ENCODE measurements at regions of chr15 and their contacts with region 1.

Region 1: DNA sequence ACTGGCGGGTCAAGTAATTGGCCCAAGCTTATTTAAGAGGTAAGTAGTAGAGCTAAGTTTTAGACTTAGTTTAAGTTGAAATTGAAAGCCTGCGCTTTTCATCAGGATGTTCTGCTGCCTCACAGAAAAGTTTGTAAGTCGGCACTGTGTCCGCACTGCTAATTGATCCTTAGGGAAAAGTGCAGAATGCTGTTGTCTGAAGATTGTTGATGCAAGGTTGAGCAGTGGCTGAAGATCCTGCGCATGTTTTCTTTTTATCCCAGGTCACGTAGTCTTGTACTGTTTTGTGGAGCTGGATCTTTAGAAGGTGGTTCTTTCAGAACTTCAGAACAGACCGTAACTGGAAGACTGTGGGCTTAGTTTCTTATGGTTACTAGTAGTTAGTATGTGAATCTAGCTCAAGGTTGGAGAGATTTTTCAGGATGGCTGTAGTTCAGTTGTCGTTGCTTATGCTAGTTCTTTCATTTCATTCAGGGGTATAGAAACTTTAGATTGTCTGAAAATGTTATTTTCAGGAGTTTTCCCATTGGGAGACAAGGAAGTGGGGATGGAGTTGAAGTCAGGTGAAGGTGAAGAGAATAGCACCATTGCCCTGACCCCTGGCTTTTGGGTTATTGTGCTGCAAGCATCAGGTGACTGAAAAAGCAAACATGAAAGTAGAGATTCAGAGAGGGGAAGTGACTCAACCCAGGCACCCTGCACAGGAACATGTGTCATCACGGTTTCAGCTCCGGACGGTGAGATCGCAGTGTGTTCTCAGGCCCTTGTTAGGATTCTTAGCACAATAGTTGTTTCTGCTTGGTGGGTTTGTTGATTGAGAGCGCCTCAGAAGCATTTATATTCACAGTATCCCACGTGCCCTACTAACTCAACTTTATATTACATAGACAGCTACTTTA is 32.8 kb downstream of the AKAP13 start:
- DNase-seq: peak; percentile 66
- H3K4me3 Mint-ChIP-seq: peak overlapping the region; percentile 64
- H3K27ac Mint-ChIP-seq: peak overlapping the region; percentile 85
- H3K4me1 Mint-ChIP-seq: peaks cover 64% of the 10 kb centered on the region
- H3K27me3 Mint-ChIP-seq: no peaks in the 10 kb centered on the region

Region 2: DNA sequence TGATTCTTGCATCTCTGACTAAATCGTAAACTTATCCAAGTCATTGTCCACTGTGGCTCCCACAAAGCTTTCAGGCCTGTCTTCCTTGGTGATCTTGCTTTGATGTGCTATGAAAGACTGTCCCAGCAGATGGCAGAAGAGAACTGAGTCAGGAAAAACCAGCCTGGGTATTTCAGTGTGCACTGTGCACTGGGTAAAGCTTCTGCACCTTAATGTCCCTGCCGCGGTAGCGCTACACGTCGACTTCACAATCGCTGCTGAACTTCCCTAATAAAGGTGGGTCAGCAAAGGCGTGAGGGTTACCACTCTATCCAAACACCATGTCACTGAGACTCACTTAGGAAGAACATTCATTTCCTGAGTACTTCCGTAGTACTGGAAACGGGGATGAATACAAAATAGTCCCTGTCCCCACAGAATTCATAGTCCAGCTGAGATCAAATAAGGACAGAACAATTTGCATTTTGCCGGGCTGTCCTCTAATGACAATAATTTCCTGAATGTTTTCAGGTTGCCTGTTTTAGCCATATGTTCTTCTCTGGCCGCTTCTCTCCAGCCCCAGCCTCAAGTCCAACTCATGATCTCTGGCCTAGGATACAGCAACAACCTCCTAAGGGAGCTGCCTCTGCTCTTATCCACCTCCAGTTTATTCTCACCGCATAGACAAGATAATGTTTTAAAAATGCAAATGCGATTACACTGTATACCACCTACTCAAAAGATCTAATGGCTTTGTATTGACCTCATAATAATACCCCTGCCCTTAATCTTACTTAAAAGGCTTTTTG is 116.4 kb before region 1 on chr15:
- intact Hi-C with region 1: loop called (anchors 1 kb)
- DNase-seq: peak; percentile 68
- H3K4me3 Mint-ChIP-seq: peak overlapping the region; percentile 34
- H3K27ac Mint-ChIP-seq: no peak overlapping the region
- H3K4me1 Mint-ChIP-seq: peaks cover 18% of the 10 kb centered on the region
- H3K27me3 Mint-ChIP-seq: peaks cover 5% of the 10 kb centered on the region

Region 3: DNA sequence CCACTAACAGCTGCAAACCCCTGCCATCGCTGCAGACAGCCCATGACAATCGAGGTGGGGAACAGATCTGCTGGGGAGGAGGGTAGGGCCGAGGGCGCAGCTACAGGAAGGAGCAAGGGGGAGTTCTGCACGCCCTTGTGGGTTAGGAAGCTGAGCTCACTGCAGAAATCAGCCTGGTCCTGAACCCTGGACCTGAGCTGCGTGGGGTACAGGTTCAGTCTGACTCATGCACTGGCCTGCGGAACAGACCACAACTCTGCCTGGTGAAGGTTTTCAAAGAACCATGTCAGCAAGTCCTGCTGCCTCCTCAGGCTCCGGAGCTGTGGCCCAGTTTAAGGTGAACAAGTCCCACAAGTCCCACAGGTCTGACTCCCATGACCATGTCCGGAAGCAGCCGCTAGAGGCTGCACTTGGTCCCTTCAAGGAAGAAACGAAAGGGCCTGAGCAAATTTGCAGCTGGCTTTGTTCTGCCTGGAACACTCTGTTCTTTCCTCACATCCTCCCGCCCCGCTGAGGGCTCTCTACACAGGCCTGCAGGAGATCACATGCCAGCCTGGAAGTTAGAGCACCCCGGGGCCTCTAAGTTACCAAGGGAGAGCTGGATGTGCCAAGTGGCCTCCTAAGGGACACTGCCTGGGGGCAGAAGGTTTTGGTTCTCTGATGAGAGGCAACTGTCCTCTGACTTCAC is 82.2 kb before region 1 on chr15:
- intact Hi-C with region 1: loop called (anchors 1 kb)
- DNase-seq: peak; percentile 72
- H3K4me3 Mint-ChIP-seq: peak overlapping the region; percentile 88
- H3K27ac Mint-ChIP-seq: peak overlapping the region; percentile 92
- H3K4me1 Mint-ChIP-seq: peaks cover 51% of the 10 kb centered on the region
- H3K27me3 Mint-ChIP-seq: no peaks in the 10 kb centered on the region

Region 4: GRCh38 chr15:85380217-85380811 is 32.9 kb before region 1 on chr15 and contains the start of gene AKAP13:
- intact Hi-C with region 1: loop called (anchors 1 kb)
- DNase-seq: peak; percentile 93
- H3K4me3 Mint-ChIP-seq: peak within 1 kb of the TSS; percentile 90
- H3K27ac Mint-ChIP-seq: peak within 1 kb of the TSS; percentile 94
- H3K4me1 Mint-ChIP-seq: peaks cover 68% of the 10 kb centered on the region
- H3K27me3 Mint-ChIP-seq: peaks cover 2% of the 10 kb centered on the region
- total RNA-seq, gene AKAP13: 78.9 and 81.9 TPM in 2 replicates

Region 5: DNA sequence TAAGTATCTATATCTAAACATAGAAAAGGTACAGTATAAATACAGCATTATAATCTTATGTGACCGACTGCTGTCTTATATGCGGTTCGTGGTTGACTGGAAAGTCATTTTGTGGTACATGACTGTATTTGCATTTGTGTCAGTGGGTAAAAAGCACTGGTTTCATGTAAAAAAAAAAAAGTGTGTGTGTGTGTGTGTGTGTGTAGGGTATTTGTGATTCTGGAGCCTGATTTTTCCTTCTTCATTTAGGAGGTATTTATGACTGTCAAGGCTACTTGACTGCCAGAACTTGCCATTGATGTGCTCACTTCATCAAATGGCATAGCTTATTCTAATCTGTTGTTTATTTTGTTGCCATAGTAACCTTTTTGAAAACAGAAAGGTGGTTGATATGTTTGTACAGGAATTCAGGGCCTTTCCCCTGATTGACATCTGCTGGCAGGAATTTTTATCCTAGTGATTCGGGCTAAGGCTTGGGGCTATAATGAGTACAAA is 30.4 kb after region 1 on chr15:
- intact Hi-C with region 1: loop called (anchors 2 kb)
- DNase-seq: no peak
- H3K4me3 Mint-ChIP-seq: peak overlapping the region; percentile 6
- H3K27ac Mint-ChIP-seq: peak overlapping the region; percentile 84
- H3K4me1 Mint-ChIP-seq: peaks cover 28% of the 10 kb centered on the region
- H3K27me3 Mint-ChIP-seq: peaks cover 2% of the 10 kb centered on the region

Region 6: GRCh38 chr15:85582131-85583079 is 169.2 kb after region 1 on chr15:
- intact Hi-C with region 1: loop called (anchors 2 kb)
- DNase-seq: peak; percentile 67
- H3K4me3 Mint-ChIP-seq: peak overlapping the region; percentile 84
- H3K27ac Mint-ChIP-seq: peak overlapping the region; percentile 95
- H3K4me1 Mint-ChIP-seq: peaks cover 84% of the 10 kb centered on the region
- H3K27me3 Mint-ChIP-seq: no peaks in the 10 kb centered on the region

Region 7: DNA sequence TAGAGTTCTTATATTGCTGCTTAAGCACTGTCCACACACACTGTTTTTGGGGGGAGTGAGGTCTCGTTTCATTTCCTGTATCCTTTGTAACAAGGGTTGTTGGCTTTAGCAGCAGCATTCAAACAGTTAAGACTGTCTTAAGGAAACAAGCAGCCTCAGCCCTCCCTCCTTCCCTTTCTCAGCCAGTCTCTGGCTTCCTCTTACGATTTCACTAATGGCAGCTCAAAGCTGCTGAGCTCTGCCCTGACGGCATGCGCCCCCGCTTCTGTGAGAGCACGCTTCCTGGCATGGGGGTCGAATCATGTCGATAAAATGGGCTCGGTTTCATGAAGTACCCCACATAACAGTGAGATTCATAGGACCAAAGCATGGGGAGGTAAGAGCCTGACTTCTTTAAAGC is 276.5 kb after region 1 on chr15:
- intact Hi-C with region 1: loop called (anchors 5 kb)
- DNase-seq: peak; percentile 56
- H3K4me3 Mint-ChIP-seq: peak overlapping the region; percentile 96
- H3K27ac Mint-ChIP-seq: peak overlapping the region; percentile 100
- H3K4me1 Mint-ChIP-seq: peaks cover 73% of the 10 kb centered on the region
- H3K27me3 Mint-ChIP-seq: no peaks in the 10 kb centered on the region